Endothelial cell of umbilical vein (primary cell): ENCODE measurements at regions of chr4 and their contacts with region 1.

Region 1: GRCh38 chr4:100517864-100518341 is at the start of gene EMCN:
- DNase-seq: peak; percentile 90
- H3K4me3 ChIP-seq: peak within 1 kb of the TSS; percentile 39 to 99 (median 54)
- H3K27ac ChIP-seq: peak within 1 kb of the TSS; percentile 70
- H3K4me1 ChIP-seq: peaks cover 41% of the 10 kb centered on the region
- H3K27me3 ChIP-seq: no peaks in the 10 kb centered on the region
- CTCF ChIP-seq: no peak
- POLR2A ChIP-seq: peak; percentile 56
- total RNA-seq, gene EMCN: 76.2 and 97.3 TPM in 2 replicates

Region 2: GRCh38 chr4:99949034-99949998 is 568.6 kb before region 1 on chr4:
- CTCF ChIA-PET with region 1: no interaction called
- POLR2A ChIA-PET with region 1: no interaction called
- dilution Hi-C with region 1: no loop called
- intact Hi-C with region 1: loop called (anchors 5 kb)
- DNase-seq: peak; percentile 91
- H3K4me3 ChIP-seq: peak overlapping the region; percentile 66 to 87 (median 86)
- H3K27ac ChIP-seq: peak overlapping the region; percentile 75
- H3K4me1 ChIP-seq: peaks cover 38% of the 10 kb centered on the region
- H3K27me3 ChIP-seq: no peaks in the 10 kb centered on the region
- CTCF ChIP-seq: peak; percentile 83 to 91
- POLR2A ChIP-seq: no peak

Region 3: GRCh38 chr4:100198061-100198460 is 319.8 kb before region 1 on chr4:
- CTCF ChIA-PET with region 1: no interaction called
- POLR2A ChIA-PET with region 1: no interaction called
- dilution Hi-C with region 1: no loop called
- intact Hi-C with region 1: no loop called
- DNase-seq: no peak
- H3K4me3 ChIP-seq: no peak overlapping the region
- H3K27ac ChIP-seq: no peak overlapping the region
- H3K4me1 ChIP-seq: no peaks in the 10 kb centered on the region
- H3K27me3 ChIP-seq: no peaks in the 10 kb centered on the region
- CTCF ChIP-seq: no peak
- POLR2A ChIP-seq: no peak

Region 4: DNA sequence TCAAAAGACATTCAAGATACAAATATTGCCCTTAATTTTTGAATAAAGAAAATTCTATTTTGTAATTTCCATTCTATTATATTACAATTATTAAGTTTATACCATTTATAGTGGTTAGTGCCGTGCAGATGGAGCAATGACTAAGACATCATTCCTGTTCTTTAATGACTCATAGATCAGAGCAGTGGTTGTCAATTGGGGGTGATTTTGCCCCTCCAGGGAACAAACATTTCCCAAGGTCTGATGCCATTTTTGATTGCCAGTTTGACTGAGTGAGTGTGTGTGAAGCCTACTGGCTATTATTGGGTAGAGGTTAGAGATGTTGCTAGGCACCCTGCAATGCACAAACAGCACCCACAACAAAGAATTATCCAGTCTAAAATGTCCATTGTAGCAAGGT is 229.7 kb before region 1 on chr4:
- CTCF ChIA-PET with region 1: no interaction called
- POLR2A ChIA-PET with region 1: no interaction called
- dilution Hi-C with region 1: no loop called
- intact Hi-C with region 1: loop called (anchors 5 kb)
- DNase-seq: no peak
- H3K4me3 ChIP-seq: no peak overlapping the region
- H3K27ac ChIP-seq: no peak overlapping the region
- H3K4me1 ChIP-seq: peaks cover 31% of the 10 kb centered on the region
- H3K27me3 ChIP-seq: no peaks in the 10 kb centered on the region
- CTCF ChIP-seq: no peak
- POLR2A ChIP-seq: no peak

Region 5: DNA sequence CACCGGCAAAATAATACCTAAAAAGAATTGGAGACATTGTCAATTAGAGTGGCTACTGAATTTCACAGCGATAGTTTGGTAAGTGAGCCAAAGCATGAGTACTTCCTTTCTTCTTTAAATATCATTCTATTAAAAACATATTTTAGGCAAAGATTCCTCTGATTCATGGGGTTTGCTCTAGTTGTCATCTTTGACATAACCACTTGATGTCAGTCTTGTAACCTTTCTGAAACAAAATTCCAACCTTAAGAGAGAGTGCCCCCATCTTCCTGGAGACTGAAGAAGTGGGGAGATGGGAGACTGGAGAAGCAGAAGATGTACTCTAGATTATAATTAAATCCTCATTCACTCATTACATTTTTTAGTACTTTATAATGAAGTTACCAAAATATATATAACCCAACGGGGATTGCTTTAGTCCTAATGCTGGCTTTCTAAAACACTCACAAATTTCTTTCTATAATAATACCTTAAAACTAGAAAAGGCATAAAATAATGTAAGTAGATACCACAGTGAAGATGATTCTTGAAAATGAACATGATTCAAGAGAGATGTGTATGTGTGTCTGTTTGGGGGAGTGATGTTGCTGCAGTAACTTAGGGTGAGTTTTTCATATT is 96.4 kb before region 1 on chr4:
- CTCF ChIA-PET with region 1: no interaction called
- POLR2A ChIA-PET with region 1: no interaction called
- dilution Hi-C with region 1: no loop called
- intact Hi-C with region 1: loop called (anchors 1 kb)
- DNase-seq: peak; percentile 73
- H3K4me3 ChIP-seq: no peak overlapping the region
- H3K27ac ChIP-seq: peak overlapping the region; percentile 43
- H3K4me1 ChIP-seq: peaks cover 18% of the 10 kb centered on the region
- H3K27me3 ChIP-seq: no peaks in the 10 kb centered on the region
- CTCF ChIP-seq: peak; percentile 30 to 44
- POLR2A ChIP-seq: no peak

Region 6: DNA sequence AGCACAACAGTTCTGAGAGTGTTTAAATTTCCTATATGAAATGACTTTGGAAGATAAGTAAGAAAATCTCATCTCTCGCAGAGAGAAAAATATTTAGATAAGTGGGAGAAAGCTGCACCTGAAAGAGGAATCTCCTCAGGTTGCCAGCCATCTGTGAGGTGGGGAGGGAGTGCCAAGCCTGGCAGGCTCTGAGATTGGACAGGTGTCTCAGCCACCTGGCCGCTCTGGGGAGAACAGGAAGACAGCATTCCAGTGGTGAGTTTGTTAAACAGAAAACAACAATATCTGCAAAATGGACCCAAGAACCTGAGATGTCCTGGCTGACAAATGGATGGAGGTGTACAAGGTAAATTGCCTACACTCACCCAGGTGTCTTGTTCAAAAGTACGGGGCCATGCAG is 31.4 kb before region 1 on chr4:
- CTCF ChIA-PET with region 1: no interaction called
- POLR2A ChIA-PET with region 1: no interaction called
- dilution Hi-C with region 1: no loop called
- intact Hi-C with region 1: no loop called
- DNase-seq: no peak
- H3K4me3 ChIP-seq: no peak overlapping the region
- H3K27ac ChIP-seq: no peak overlapping the region
- H3K4me1 ChIP-seq: no peaks in the 10 kb centered on the region
- H3K27me3 ChIP-seq: no peaks in the 10 kb centered on the region
- CTCF ChIP-seq: no peak
- POLR2A ChIP-seq: no peak

Region 7: DNA sequence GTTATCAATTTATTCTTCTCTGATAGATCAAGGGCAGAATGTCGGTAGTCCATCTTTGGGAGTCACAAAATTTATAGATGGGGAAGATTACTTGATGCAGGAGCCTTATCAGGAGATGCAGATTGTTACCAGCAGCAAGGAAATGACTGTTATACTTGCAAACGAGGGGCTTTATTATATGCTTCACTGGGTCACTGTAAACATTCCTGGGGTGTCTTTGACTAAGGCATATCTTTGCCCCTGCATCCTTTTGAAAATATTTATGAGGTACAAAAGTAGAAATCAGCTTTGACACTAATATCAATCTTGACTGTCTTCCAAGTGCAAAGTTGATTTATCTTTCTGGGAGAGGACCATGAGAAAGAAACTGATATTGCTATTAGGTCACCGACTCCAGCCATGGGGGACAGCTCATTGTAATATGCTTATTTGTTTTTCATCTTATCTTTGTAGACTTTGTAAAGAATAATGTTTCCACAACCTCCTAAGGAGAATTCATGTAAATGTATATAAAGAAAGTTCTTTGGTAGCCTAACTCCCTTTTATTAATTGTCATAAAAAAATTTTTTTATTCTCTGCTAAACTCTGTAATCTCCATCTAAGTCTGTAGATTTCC is 177.2 kb after region 1 on chr4:
- CTCF ChIA-PET with region 1: no interaction called
- POLR2A ChIA-PET with region 1: no interaction called
- dilution Hi-C with region 1: no loop called
- intact Hi-C with region 1: loop called (anchors 1 kb)
- DNase-seq: peak; percentile 95
- H3K4me3 ChIP-seq: no peak overlapping the region
- H3K27ac ChIP-seq: no peak overlapping the region
- H3K4me1 ChIP-seq: peaks cover 26% of the 10 kb centered on the region
- H3K27me3 ChIP-seq: no peaks in the 10 kb centered on the region
- CTCF ChIP-seq: no peak
- POLR2A ChIP-seq: peak; percentile 67

Region 8: GRCh38 chr4:100736641-100737451 is 218.9 kb after region 1 on chr4:
- CTCF ChIA-PET with region 1: interaction called, 4 read pairs
- POLR2A ChIA-PET with region 1: no interaction called
- dilution Hi-C with region 1: no loop called
- intact Hi-C with region 1: loop called (anchors 1 kb)
- DNase-seq: peak; percentile 97
- H3K4me3 ChIP-seq: no peak overlapping the region
- H3K27ac ChIP-seq: peak overlapping the region; percentile 83
- H3K4me1 ChIP-seq: peaks cover 27% of the 10 kb centered on the region
- H3K27me3 ChIP-seq: no peaks in the 10 kb centered on the region
- CTCF ChIP-seq: no peak
- POLR2A ChIP-seq: peak; percentile 42